Activated CD4-positive, alpha-beta T cell treated with anti-CD3 and anti-CD28 coated beads, Interleukin-2, amount 10 ng/mL, durations not matched to agents 24 days and 14 days (primary cell): ENCODE measurements at regions of chr2 and their contacts with region 1.

Region 1: DNA sequence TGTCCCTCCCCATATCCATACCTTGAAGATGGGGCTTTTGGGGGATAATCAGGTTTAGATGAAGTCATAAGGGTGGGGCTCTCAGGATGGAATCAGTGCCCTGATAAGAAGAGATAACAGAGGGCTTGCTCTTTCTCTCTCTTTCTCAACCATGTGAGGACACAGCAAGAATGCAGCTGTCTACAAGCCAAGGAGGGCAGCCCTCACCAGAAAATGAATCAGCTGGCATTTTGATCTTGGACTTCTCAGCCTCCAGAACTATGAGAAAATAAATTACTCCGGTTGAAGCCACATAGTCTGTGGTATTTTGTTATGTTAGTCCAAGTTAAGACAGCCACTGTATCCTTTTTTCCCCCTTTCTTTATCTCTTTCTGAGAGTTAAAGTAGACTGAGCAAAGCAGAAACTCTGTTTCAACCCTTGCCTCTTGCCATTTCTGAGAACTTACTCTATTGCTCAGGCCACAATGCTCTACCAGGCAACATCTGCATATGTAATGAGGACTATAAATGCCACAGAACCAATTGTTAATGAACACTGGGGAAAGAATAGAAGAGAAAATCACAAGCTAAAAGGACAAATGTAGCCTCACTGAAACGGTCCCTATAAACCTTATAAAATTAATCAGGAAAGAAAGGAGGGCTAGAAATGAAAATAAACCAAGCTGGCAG is 56.9 kb downstream of the SRBD1 start:
- DNase-seq: no peak
- H3K4me3 Mint-ChIP-seq: peak overlapping the region; percentile 27
- H3K27ac Mint-ChIP-seq: peak overlapping the region; percentile 88
- H3K4me1 Mint-ChIP-seq: peaks cover 25% of the 10 kb centered on the region
- H3K27me3 Mint-ChIP-seq: no peaks in the 10 kb centered on the region

Region 2: GRCh38 chr2:45256867-45257641 is 297.2 kb before region 1 on chr2:
- intact Hi-C with region 1: no loop called
- DNase-seq: no peak
- H3K4me3 Mint-ChIP-seq: no peak overlapping the region
- H3K27ac Mint-ChIP-seq: no peak overlapping the region
- H3K4me1 Mint-ChIP-seq: no peaks in the 10 kb centered on the region
- H3K27me3 Mint-ChIP-seq: no peaks in the 10 kb centered on the region

Region 3: DNA sequence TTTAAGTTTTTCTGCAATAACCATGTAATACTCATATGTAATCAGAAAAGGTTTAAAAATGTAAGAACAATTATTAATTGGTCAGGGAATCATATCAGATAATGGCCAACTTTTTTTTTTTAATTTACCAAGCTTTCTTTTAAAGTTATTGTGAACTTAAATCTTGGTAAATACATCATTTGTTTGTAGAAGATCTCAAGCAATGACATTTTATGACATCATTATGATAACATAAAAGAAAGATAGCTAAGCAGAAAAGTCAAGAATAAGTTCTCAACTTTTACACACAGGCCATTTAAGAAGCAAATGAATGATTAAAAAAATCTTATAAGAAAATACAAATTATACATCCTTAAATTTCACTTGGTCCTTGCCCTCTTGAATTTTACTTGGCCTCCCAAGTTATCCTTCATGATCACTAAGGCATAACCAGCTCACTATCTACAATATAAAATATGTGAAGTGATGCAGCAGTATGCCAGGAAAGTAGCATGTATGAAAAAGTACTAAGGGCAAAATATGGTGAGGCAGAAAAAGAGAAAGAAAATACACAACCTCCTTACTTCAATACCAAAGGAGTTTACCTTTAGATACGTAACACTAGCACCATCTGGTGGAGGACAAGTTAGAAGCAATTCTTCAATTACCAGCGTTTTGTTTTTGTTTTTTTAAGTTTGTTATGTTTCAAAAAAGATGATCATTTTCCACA is 59.8 kb before region 1 on chr2:
- intact Hi-C with region 1: loop called (anchors 2 kb)
- DNase-seq: peak; percentile 70
- H3K4me3 Mint-ChIP-seq: no peak overlapping the region
- H3K27ac Mint-ChIP-seq: no peak overlapping the region
- H3K4me1 Mint-ChIP-seq: peaks cover 22% of the 10 kb centered on the region
- H3K27me3 Mint-ChIP-seq: no peaks in the 10 kb centered on the region